Activated CD4-positive, alpha-beta T cell treated with anti-CD3 and anti-CD28 coated beads for 36 hours (primary cell): ENCODE measurements at regions of chr15 and their contacts with region 1.

Region 1: GRCh38 chr15:89358755-89359439 is 24.3 kb upstream of the POLG start:
- DNase-seq: peak; percentile 91
- ATAC-seq: peak; percentile 90
- H3K4me3 Mint-ChIP-seq: peak overlapping the region; percentile 70
- H3K27ac Mint-ChIP-seq: no peak overlapping the region
- H3K4me1 Mint-ChIP-seq: no peaks in the 10 kb centered on the region
- H3K27me3 Mint-ChIP-seq: peaks cover 64% of the 10 kb centered on the region

Region 2: GRCh38 chr15:89346516-89347231 is 12.2 kb before region 1 on chr15:
- CTCF ChIA-PET with region 1: interaction called, 42 read pairs
- POLR2A ChIA-PET with region 1: no interaction called
- intact Hi-C with region 1: no loop called
- DNase-seq: no peak
- ATAC-seq: no peak
- H3K4me3 Mint-ChIP-seq: no peak overlapping the region
- H3K27ac Mint-ChIP-seq: no peak overlapping the region
- H3K4me1 Mint-ChIP-seq: peaks cover 10% of the 10 kb centered on the region
- H3K27me3 Mint-ChIP-seq: peaks cover 2% of the 10 kb centered on the region

Region 3: DNA sequence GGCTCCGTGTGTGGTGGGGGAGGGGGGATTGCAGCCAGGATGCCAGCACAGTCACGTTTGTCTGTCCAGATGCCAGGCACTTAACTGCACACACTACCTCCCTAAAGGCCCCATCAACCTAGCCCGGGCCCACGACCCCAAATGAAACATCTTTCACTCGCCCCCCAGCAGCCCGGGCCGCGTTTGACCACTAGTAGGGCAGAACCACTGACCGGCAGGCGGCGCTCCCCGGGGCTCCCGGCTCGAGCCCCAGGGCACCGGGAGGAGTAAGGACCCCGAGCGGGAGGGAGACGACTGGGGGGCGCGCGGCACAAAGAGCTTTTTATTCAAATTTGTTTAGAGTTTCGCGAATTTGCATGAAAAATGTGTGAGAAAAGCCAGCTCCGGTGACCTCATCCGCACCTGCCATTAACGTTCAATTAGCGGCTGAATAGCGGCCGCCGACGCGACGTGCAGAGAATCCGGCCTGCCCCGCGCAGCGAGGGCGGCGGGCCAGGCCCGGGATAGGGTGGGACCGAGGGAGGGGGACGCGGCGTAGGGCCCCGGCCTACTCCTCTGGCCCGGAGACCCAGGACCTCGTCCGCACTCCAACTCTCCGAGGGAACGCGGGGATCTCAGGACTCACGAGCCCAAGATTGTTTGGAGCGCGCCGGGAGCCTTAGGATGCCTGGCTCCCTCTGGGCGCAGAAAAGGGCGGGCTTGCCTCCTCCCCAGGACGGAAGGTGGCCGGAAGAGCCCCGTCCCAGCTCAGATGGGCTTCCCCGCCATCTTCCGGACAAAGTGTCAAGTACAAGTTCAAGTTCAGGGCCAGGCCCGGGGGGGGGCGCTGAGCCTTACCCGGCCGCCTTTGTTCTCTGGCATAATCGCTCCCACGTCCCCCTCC is 40.6 kb after region 1 on chr15:
- CTCF ChIA-PET with region 1: interaction called, 23 read pairs
- POLR2A ChIA-PET with region 1: no interaction called
- intact Hi-C with region 1: loop called in 1 of 2 experiments (anchors 1 kb)
- DNase-seq: peak; percentile 61
- ATAC-seq: peak; percentile 77
- H3K4me3 Mint-ChIP-seq: peak overlapping the region; percentile 56
- H3K27ac Mint-ChIP-seq: peak overlapping the region; percentile 63
- H3K4me1 Mint-ChIP-seq: peaks cover 11% of the 10 kb centered on the region
- H3K27me3 Mint-ChIP-seq: peaks cover 56% of the 10 kb centered on the region

Region 4: GRCh38 chr15:89416141-89416853 is 57.4 kb after region 1 on chr15:
- CTCF ChIA-PET with region 1: interaction called, 108 read pairs
- POLR2A ChIA-PET with region 1: no interaction called
- intact Hi-C with region 1: loop called in 1 of 2 experiments (anchors 1 kb)
- DNase-seq: peak; percentile 93
- ATAC-seq: peak; percentile 92
- H3K4me3 Mint-ChIP-seq: no peak overlapping the region
- H3K27ac Mint-ChIP-seq: no peak overlapping the region
- H3K4me1 Mint-ChIP-seq: peaks cover 10% of the 10 kb centered on the region
- H3K27me3 Mint-ChIP-seq: peaks cover 75% of the 10 kb centered on the region

Region 5: GRCh38 chr15:89442671-89443307 is 83.9 kb after region 1 on chr15:
- CTCF ChIA-PET with region 1: interaction called, 11 read pairs
- POLR2A ChIA-PET with region 1: no interaction called
- intact Hi-C with region 1: no loop called
- DNase-seq: peak; percentile 82
- ATAC-seq: peak; percentile 71
- H3K4me3 Mint-ChIP-seq: no peak overlapping the region
- H3K27ac Mint-ChIP-seq: no peak overlapping the region
- H3K4me1 Mint-ChIP-seq: no peaks in the 10 kb centered on the region
- H3K27me3 Mint-ChIP-seq: peaks cover 20% of the 10 kb centered on the region

Region 6: DNA sequence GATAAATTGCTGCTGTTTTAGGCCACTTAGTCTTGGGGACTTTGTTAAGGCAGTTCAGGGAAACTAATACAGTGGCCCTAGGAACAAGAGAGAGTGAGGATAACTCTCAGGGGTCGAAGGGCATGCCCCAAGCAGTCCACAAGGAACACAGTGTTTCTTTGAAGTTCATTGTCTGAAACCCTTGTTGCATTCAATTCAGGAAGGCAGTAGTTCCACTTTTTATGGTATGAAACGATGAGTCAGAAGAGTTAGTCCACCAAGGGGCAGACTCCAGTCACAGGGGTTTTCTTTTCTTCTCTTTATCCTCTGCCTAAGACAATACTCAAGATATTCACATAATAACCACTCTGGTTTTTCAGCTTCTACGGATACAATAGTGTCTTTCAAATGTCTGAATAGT is 192.6 kb after region 1 on chr15:
- CTCF ChIA-PET with region 1: interaction called, 5 read pairs
- POLR2A ChIA-PET with region 1: no interaction called
- intact Hi-C with region 1: loop called in 1 of 2 experiments (anchors 5 kb)
- DNase-seq: no peak
- ATAC-seq: peak; percentile 44
- H3K4me3 Mint-ChIP-seq: no peak overlapping the region
- H3K27ac Mint-ChIP-seq: no peak overlapping the region
- H3K4me1 Mint-ChIP-seq: peaks cover 6% of the 10 kb centered on the region
- H3K27me3 Mint-ChIP-seq: peaks cover 9% of the 10 kb centered on the region